Colonic mucosa (tissue), 4 donors: ENCODE measurements at regions of chr16 and their contacts with region 1.

Region 1: DNA sequence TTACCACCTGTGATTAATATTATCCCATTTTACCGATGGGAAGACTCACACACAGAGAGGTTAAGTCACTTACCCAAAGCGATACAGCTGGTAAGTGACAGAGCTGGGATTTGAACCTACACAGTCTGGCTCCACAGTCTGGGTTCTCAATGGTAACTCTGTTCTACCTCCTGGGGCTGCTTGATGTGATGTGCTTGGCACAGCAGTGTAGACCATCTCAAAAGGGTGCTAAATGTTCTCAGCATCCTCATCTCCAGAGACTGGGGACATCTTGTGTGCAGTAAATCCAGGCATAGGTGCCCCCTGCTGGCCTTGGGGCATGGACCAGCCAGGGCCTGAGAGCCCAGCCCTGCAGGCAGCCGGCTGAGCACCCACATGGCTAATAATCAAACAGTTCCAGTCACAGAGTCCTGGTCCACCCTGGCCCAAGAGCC is 15.4 kb upstream of the KATNB1 start:
- DNase-seq: peak; percentile 53
- H3K4me3 ChIP-seq: no peak overlapping the region
- H3K27ac ChIP-seq: no peak overlapping the region
- H3K4me1 ChIP-seq: no peaks in the 10 kb centered on the region
- H3K27me3 ChIP-seq: no peaks in the 10 kb centered on the region
- CTCF ChIP-seq: peak; percentile 58

Region 2: DNA sequence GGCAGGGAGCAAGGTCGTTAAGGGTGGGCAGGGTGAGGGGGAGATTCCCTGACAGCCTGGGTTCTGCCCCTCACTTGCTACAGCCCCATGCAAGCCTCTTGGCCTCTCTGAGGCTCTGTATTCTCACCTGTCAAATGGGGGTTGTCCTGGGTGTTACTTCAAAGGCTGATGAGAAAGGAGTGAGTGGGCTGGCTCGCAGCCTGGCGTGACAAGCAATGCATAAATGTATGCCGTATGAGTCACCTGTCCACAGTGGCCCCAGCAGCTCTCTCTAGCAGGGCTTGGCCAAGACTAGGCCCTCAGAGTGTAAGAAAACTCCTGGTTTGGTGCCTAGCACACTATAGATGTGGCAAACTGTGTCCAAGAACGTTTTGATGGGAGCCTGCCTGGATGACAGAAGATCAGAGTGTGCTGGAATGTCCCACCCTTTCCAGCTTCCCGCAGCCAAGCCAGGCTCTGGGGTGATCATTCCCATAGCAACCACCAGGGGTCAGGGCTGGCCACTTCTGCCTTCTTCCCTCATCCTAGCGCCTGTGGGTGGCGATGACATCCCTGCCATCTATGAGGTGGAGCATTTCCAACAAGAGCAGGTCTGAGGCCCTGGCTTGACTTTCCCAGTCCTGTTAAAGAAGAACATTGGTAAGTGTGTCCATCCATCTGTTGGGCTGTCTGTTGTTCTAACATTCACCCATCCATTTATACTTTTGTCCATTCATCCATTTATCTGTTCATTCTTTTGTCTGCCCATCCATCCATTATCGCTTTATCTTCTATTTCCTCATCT is 128.9 kb before region 1 on chr16:
- intact Hi-C with region 1: loop called (anchors 5 kb)
- DNase-seq: peak; percentile 75
- H3K4me3 ChIP-seq: no peak overlapping the region
- H3K27ac ChIP-seq: no peak overlapping the region
- H3K4me1 ChIP-seq: no peaks in the 10 kb centered on the region
- H3K27me3 ChIP-seq: no peaks in the 10 kb centered on the region
- CTCF ChIP-seq: peak; percentile 90